ENCODE measurements at regions of chr22 and their contacts with region 1.

Region 1: DNA sequence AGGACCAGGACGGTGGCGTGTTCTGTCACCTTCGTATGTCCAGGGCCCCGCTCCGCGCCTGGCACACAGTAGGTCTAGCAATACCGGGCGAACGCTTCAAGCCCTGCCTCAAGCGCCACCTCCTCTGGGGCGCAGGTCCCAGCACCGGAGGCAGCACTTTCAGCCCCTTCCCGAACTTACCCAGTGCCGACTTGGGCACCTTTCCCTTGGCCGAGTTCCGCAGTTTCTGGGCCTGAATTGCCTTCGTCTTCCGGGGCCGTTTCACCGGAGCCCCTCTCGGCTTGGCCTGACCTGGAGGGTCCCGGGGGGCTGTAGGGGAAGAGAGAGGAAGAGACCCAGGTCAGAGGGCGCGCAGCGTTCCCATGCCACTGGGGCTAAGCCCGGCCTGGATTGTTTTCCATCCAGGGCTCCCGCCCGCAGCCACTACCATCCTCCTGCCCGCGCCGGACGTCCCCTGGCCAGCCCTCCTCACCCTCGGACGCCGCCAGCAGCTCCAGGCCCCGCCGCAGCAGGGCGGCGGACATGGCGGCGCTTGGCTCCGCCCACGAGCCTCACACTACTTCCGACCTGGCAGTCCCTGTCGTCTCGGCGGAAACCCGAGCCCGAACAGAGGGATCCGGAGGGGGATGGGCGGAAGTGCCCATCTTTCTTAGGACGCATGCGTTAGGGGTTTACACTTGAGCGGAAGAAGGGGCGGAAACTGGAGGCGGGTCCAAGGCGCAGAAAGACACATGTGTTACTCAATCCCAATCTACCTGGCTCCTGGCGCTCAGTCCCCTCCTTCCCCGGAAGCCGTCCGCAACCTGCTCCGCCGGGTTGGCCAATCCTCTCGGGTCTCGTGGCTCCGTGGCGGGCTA is at the start of gene RPS19BP1:
- DNase-seq: peak; percentile 99 to 100
- H3K4me3 ChIP-seq: peak within 1 kb of the TSS; percentile 89 to 95
- H3K27ac ChIP-seq: peak within 1 kb of the TSS; percentile 85 to 91
- H3K4me1 ChIP-seq: peaks cover 16 to 42% of the 10 kb centered on the region in 2 donors
- H3K27me3 ChIP-seq: no peaks in the 10 kb centered on the region
- CTCF ChIP-seq: peak in 1 of 3 experiments; percentile 9
- total RNA-seq, gene RPS19BP1: 218 TPM

Region 2: GRCh38 chr22:39152511-39153219 is 379.8 kb before region 1 on chr22 and contains the start of gene CBX7:
- intact Hi-C with region 1: loop called (anchors 5 kb)
- DNase-seq: peak; percentile 84 to 98
- H3K4me3 ChIP-seq: peak within 1 kb of the TSS; percentile 88 to 92
- H3K27ac ChIP-seq: peak within 1 kb of the TSS; percentile 93 to 96
- H3K4me1 ChIP-seq: peaks cover 6 to 24% of the 10 kb centered on the region in 2 donors
- H3K27me3 ChIP-seq: no peaks in the 10 kb centered on the region
- CTCF ChIP-seq: no peak
- total RNA-seq, gene CBX7: 261 TPM

Region 3: GRCh38 chr22:39395936-39396796 is 136.3 kb before region 1 on chr22:
- intact Hi-C with region 1: loop called (anchors 2 kb)
- DNase-seq: no peak
- H3K4me3 ChIP-seq: no peak overlapping the region
- H3K27ac ChIP-seq: no peak overlapping the region
- H3K4me1 ChIP-seq: peaks cover 3 to 8% of the 10 kb centered on the region in 2 donors
- H3K27me3 ChIP-seq: no peaks in the 10 kb centered on the region
- CTCF ChIP-seq: no peak

Region 4: DNA sequence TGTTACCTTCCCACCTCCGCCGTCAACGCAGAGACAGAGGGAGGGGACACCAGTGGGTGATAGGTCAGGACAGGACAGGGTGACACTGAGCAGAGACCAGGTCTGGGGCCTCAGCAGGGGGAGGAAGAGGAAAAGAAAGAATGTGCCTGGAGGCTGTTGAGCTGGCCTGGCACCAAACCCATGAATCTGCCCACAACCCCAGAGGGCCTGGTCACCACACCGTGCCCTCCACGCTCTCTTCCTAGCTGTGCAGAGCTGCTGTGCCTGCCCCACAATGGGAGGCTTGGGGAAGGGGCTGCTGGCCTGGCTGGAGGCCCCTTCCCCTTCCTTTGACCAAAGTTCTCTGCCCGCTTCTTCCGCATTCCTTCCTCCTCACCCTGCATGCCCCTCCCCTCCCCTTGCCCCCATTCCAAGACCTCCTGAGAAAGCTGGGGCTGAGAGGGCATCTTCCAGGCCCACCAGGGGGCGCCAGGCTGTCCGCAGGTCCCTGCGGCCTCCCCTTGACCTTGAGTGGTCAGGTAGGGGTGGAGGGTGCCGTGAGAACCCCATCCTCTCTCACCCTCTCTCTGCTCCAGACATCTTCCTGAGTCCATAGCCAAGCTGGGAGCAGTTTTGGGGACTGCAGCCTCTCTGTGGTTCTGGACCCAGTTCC is 27.1 kb after region 1 on chr22:
- intact Hi-C with region 1: no loop called
- DNase-seq: no peak
- H3K4me3 ChIP-seq: no peak overlapping the region
- H3K27ac ChIP-seq: no peak overlapping the region
- H3K4me1 ChIP-seq: peaks cover 0 to 6% of the 10 kb centered on the region in 2 donors
- H3K27me3 ChIP-seq: peaks cover 13% of the 10 kb centered on the region
- CTCF ChIP-seq: no peak

Region 5: DNA sequence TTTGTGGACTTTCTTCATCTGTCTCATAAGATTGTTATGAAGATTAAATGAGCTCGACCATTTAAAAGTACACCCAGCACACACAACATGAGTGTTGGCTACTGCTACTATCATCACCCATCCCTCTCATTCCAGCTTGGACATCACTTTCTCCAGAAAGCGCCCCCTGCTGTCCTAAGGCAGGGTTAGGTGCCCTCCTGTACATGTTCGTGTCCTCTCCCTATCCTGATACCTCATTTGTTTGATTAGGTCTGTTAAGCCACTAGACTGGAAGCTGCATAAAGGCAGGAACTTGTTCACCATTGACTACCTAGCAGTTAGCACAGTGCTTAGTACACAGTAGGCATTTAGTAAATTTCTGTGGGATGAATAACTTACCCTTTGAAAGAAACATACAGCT is 275.6 kb after region 1 on chr22:
- intact Hi-C with region 1: loop called (anchors 5 kb)
- DNase-seq: no peak
- H3K4me3 ChIP-seq: no peak overlapping the region
- H3K27ac ChIP-seq: no peak overlapping the region
- H3K4me1 ChIP-seq: no peaks in the 10 kb centered on the region
- H3K27me3 ChIP-seq: no peaks in the 10 kb centered on the region
- CTCF ChIP-seq: no peak

Region 6: DNA sequence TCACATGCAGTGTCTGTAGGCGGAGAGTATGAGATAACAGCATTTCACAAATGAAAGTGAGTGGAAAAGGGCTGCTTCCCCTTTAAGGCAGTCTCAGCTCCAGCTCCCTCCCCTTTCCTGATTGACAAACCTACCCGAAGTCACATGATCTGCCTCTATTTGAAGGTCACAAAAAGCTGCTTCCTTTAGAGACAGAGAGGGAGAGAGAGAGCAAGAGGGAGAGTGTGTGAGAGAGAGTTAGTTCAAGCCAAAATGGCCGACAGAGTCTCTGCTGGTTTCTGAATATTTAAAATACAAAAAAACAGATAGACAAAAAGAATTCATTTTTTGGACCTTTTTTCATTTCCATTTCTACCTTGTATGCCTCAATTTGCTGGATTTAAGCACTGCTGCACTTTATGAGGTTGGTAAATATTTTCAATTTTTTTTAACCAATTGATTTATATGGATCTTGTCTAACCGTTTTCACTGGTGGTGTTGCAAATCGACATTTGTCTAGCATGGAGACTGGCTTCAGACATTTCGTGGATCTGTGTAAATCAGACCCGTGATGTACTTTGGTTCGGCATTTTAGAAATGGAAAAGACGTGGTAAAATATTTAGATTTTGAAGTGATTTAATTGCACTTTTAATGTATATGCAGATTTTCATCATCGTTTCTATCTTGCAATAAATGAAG is 645.4 kb after region 1 on chr22 and contains the start of gene TNRC6B:
- intact Hi-C with region 1: loop called (anchors 5 kb)
- DNase-seq: peak; percentile 42 to 89
- H3K4me3 ChIP-seq: peak within 1 kb of the TSS; percentile 65 to 67
- H3K27ac ChIP-seq: peak within 1 kb of the TSS; percentile 75 to 82
- H3K4me1 ChIP-seq: peaks cover 7 to 36% of the 10 kb centered on the region in 2 donors
- H3K27me3 ChIP-seq: no peaks in the 10 kb centered on the region
- CTCF ChIP-seq: no peak
- total RNA-seq, gene TNRC6B: 22.4 TPM

Measured in ascending aorta (tissue), 2 donors.